ENCODE measurements at regions of chr3 and their contacts with region 1.

Region 1: DNA sequence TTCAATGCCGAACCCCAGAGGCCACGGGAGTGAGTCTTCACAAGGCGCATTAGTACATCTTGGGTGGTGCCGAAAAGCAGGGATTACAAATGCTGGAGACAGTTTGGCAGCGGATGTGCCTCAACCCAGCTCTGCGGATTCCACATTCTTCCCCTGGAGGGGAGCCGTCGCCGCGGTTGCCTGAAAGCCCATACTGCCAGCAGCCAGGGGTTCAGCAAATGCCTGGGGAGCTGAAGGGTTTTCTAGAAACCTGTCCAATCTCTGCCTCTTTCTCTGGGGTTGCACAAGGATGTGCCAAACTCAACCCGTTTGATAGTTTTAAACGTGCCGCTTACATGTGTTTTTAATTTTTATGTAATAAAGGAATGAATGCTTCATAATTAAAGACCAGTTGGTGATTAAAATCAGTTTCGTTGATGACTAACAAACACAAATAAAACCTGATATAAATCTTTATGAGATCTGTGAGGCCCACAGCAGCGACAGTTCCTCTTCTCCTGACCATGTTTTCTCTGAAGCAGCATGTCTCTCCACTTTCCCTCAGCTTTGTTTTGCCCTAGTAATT is 74.6 kb upstream of the LEKR1 start:
- DNase-seq: peak; percentile 75
- H3K4me3 ChIP-seq: peak overlapping the region; percentile 34
- CTCF ChIP-seq: peak; percentile 23

Region 2: GRCh38 chr3:156691920-156692319 is 59.6 kb before region 1 on chr3:
- CTCF ChIA-PET with region 1: no interaction called
- POLR2A ChIA-PET with region 1: no interaction called
- DNase-seq: no peak
- H3K4me3 ChIP-seq: no peak overlapping the region
- CTCF ChIP-seq: no peak

Region 3: GRCh38 chr3:156762631-156763185 is 11.2 kb after region 1 on chr3:
- CTCF ChIA-PET with region 1: interaction called, 11 read pairs
- POLR2A ChIA-PET with region 1: interaction called, 10 read pairs
- DNase-seq: peak; percentile 41
- H3K4me3 ChIP-seq: no peak overlapping the region
- CTCF ChIP-seq: no peak